ENCODE measurements at regions of chr6 and their contacts with region 1.

Region 1: DNA sequence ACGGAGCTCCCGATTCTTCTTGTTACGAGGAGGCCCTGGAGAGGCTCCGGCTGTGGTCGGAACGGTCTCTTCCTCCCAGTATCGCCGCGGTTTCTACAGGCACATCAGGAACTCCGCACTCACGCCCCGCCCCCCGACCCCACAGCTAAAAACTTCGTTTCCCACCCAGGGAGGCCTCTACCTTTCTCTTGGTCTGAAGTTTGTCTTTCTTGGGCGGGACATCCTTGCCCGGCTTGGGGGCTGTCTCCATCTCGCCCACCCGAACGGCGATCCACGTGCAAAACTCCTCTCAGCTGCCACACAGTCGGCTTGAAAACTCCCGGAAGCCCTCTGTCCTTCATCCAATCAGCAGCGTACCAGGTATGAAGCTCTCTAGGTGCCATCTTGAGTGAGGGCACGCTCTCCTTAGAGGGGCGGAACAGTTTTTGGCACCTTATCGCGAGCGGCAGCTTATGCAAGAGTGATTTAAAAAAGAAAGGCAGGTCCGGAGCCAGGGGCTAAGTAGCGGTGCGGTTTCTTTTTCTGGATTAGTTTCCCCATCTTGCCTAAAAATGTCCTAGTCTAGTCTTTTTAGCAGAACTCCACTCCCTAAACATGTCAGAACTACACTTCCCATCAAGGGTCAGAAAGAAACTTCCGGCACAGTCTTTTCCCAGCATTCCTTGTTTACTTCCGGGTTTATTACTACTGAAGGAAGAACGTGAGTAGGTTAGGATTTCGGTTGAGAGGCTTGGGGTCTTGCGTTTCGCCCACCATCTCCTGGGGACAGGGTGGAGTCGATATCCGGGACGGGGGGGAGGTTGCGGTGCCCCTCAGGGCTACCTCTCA is at the starts of genes PFDN6 and WDR46:
- DNase-seq: peak; percentile 86 to 96
- ATAC-seq: peak; percentile 98
- H3K4me3 ChIP-seq: peak within 1 kb of the TSS; percentile 81
- H3K27ac ChIP-seq: peak within 1 kb of the TSS; percentile 80 to 91
- H3K4me1 ChIP-seq: peaks cover 13% of the 10 kb centered on the region; the same call in 2 of the 3 replicates
- CTCF ChIP-seq: no peak
- EP300 ChIP-seq: no peak
- POLR2A ChIP-seq: peak; percentile 27
- RAD21 ChIP-seq: no peak
- polyA plus RNA-seq, gene PFDN6: 61.2 and 84.6 TPM in 2 replicates
- polyA plus RNA-seq, gene WDR46: 35.1 TPM in 2 replicates

Region 2: DNA sequence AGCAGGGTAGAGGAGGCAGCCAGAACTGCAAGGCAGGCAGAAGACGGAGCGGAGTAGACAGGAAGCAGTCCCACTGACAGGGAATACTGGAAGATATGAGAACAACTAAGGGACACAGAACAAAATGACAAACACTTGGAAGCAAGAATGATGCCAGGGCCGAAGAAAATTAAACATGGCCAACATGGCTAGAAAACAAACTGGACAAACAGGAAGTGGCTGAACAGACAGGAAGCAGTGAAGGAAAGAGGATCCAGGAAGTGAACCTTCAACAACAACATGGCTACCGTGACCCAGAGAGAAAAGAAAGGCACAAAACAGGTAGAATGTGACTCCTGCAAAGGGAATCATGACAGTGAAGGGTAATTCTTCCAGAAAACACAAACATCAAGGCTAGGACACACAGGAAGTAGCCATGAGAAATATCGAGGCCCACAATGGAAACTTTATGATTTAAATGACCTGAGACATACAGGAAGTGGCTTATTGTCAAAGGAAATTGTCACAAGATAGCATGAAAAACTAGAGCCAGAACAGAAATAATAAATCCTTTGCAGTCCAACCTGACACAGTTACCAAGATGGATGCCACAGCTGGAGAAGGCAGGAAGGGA is 106.0 kb before region 1 on chr6:
- CTCF ChIA-PET with region 1: no interaction called
- POLR2A ChIA-PET with region 1: no interaction called
- DNase-seq: no peak
- ATAC-seq: no peak
- H3K4me3 ChIP-seq: no peak overlapping the region
- H3K27ac ChIP-seq: no peak overlapping the region
- H3K4me1 ChIP-seq: no peaks in the 10 kb centered on the region
- CTCF ChIP-seq: no peak
- EP300 ChIP-seq: no peak
- POLR2A ChIP-seq: no peak
- RAD21 ChIP-seq: no peak

Region 3: DNA sequence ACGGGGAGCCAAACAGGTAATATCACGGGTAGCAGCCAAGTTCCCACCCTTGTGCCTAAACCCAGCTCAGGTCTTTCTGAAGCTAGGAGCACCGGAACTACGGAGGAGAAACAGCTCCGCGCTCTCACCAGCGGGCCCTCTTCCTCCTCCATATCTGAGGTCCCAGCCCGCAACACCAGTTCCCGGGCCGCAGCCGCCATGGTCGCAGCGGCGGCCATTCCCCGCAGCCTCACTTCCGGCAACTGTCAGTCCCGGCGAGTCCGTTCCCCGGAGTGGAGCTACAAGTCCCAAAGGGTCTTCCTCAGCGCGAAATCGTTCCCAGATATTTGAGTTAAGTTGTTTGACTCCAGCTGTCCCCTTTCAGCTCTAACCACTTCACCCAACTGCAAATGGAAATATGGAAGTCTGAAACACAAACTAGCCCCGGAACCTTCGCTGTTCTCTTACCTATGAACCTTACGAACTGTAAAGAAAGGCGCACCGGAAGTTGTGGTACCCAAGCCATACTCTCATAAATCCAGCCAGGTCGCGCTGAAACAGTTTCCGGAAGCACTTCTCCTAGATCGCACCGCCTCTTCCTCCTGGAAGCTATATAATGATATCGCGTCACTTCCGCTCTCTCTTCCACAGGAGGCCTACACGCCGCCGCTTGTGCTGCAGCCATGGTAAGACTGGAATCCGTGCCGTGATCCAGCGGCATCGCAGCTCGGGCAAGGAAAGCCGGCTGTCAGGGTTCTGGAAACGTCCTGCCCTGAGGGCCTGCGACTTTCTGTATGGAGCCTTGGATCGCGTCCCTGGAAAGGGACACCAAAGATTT is 17.5 kb before region 1 on chr6 and contains the starts of genes RPS18 and VPS52:
- CTCF ChIA-PET with region 1: interaction called, 44 read pairs
- POLR2A ChIA-PET with region 1: interaction called, 15 read pairs
- DNase-seq: peak; percentile 76 to 99
- ATAC-seq: peak; percentile 89 to 92
- H3K4me3 ChIP-seq: peak within 1 kb of the TSS; percentile 87
- H3K27ac ChIP-seq: peak within 1 kb of the TSS; percentile 91 to 97
- H3K4me1 ChIP-seq: peaks cover 39% of the 10 kb centered on the region
- CTCF ChIP-seq: no peak
- EP300 ChIP-seq: no peak
- POLR2A ChIP-seq: peak; percentile 98
- RAD21 ChIP-seq: no peak
- polyA plus RNA-seq, gene RPS18: 3,426 and 3,692 TPM in 2 replicates
- polyA plus RNA-seq, gene VPS52: 38.9 and 44.3 TPM in 2 replicates

Region 4: GRCh38 chr6:33276864-33277662 is 12.1 kb before region 1 on chr6 and contains the start of gene B3GALT4:
- CTCF ChIA-PET with region 1: interaction called, 44 read pairs
- POLR2A ChIA-PET with region 1: interaction called, 15 read pairs
- DNase-seq: peak; percentile 46 to 73
- ATAC-seq: peak; percentile 52 to 65
- H3K4me3 ChIP-seq: peak within 1 kb of the TSS; percentile 87
- H3K27ac ChIP-seq: peak within 1 kb of the TSS; percentile 68 to 97
- H3K4me1 ChIP-seq: peaks cover 41% of the 10 kb centered on the region
- CTCF ChIP-seq: no peak; the same call in 2 of the 3 replicates
- EP300 ChIP-seq: no peak
- POLR2A ChIP-seq: 0 out of 2 replicates have a peak, but pooled peaks have one; percentile 21
- RAD21 ChIP-seq: no peak
- polyA plus RNA-seq, gene B3GALT4: 0.54 and 0.74 TPM in 2 replicates

Region 5: DNA sequence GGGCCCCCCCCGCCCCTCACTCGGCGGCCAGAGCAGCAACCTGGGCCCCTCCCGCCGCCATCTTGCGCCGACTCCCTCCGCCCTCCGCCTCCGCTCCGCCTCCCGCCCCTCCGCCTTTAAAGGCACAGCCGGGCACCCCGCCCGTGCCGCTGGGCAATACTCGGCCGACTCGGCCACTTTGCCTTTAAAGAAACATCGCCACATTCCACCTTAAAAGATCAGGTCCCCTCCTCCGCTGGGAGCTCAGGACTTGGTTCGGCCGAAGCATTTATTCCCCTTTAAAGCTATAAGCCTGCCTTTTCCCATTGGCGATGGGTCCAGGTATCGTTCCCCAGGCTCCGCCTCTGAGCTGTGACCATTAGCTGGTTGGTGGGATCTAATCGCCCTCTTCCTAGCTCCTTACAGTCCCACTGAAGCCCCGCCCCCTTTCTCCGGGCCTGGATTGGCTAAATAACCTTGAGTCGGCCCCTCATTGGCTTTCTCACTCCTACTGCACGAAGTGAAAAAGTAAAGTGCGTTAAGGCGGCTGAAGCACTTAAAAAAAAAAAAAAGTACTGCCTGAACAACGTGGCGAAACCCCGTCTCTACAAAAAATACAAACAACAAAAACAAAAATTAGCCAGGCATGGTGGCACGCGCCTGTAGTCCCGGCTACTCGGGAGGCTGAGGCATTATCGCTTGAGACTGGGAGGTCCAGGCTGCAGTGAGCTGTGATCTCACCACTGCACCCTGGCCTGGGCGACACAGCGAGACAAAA is 28.7 kb after region 1 on chr6 and contains the start of gene ZBTB22:
- CTCF ChIA-PET with region 1: no interaction called
- POLR2A ChIA-PET with region 1: interaction called, 11 read pairs
- DNase-seq: peak; percentile 86 to 97
- ATAC-seq: peak; percentile 65 to 82
- H3K4me3 ChIP-seq: peak within 1 kb of the TSS; percentile 41
- H3K27ac ChIP-seq: peak within 1 kb of the TSS; percentile 69 to 91
- H3K4me1 ChIP-seq: peaks cover 42% of the 10 kb centered on the region
- CTCF ChIP-seq: no peak
- EP300 ChIP-seq: no peak
- POLR2A ChIP-seq: no peak
- RAD21 ChIP-seq: no peak
- polyA plus RNA-seq, gene ZBTB22: 3.2 and 4.2 TPM in 2 replicates

Region 6: DNA sequence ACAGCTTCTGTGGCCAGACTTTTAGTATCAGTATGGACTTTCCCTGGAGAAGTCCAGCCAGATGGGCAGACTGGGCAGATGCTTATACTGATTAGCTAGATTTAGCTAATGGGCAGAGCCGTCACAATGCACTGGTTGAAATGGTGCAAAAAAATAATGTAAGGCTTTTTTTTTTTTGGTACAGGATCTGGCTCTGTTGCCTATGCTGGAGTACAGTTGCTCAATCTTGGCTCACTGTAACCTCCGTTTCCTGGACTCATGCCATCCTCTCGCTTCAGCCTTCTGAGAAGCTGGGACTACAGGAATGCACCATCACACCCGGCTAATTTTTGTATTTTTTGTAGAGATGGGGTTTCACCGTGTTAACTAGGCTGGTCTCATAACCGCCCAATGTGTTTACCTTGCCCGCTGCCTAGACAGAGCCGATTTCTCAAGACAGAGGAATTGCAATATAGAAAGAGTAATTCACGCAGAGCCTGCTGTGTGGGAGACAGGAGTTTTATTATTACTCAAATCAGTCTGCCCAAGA is 86.1 kb after region 1 on chr6:
- CTCF ChIA-PET with region 1: no interaction called
- POLR2A ChIA-PET with region 1: no interaction called
- DNase-seq: peak in 1 of 2 experiments; percentile 25
- ATAC-seq: peak; percentile 62 to 77; a peak in 5 of 6 replicates
- H3K4me3 ChIP-seq: no peak overlapping the region
- H3K27ac ChIP-seq: peak overlapping the region; percentile 12 to 69; a peak in 3 of 6 replicates
- H3K4me1 ChIP-seq: peaks cover 18% of the 10 kb centered on the region; the same call in 2 of the 3 replicates
- CTCF ChIP-seq: no peak
- EP300 ChIP-seq: no peak
- POLR2A ChIP-seq: no peak
- RAD21 ChIP-seq: no peak